Heart left ventricle (tissue), 16 donors: ENCODE measurements at regions of chr12 and their contacts with region 1.

Region 1: GRCh38 chr12:70255311-70255710 is 12.1 kb downstream of the CNOT2 start:
- DNase-seq: no peak
- ATAC-seq: peak in 1 of 4 donors; percentile 47
- H3K4me3 ChIP-seq: no peak overlapping the region
- H3K27ac ChIP-seq: peak overlapping the region in 1 of 12 donors; percentile 55
- H3K4me1 ChIP-seq: peaks cover 0 to 67% (median 33%) of the 10 kb centered on the region in 12 donors
- H3K27me3 ChIP-seq: no peaks in the 10 kb centered on the region
- CTCF ChIP-seq: no peak
- POLR2A ChIP-seq: no peak

Region 2: GRCh38 chr12:70121557-70121956 is 133.8 kb before region 1 on chr12:
- intact Hi-C with region 1: no loop called
- DNase-seq: no peak
- ATAC-seq: no peak
- H3K4me3 ChIP-seq: no peak overlapping the region
- H3K27ac ChIP-seq: no peak overlapping the region
- H3K4me1 ChIP-seq: no peaks in the 10 kb centered on the region
- H3K27me3 ChIP-seq: no peaks in the 10 kb centered on the region
- CTCF ChIP-seq: no peak
- POLR2A ChIP-seq: no peak

Region 3: GRCh38 chr12:70353780-70354660 is 98.7 kb after region 1 on chr12:
- intact Hi-C with region 1: loop called in 1 of 10 experiments (anchors 10 kb)
- DNase-seq: no peak
- ATAC-seq: peak in 1 of 4 donors; percentile 36
- H3K4me3 ChIP-seq: no peak overlapping the region
- H3K27ac ChIP-seq: peak overlapping the region in 1 of 12 donors; percentile 67
- H3K4me1 ChIP-seq: peaks cover 0 to 13% (median 0%) of the 10 kb centered on the region in 12 donors
- H3K27me3 ChIP-seq: no peaks in the 10 kb centered on the region
- CTCF ChIP-seq: no peak
- POLR2A ChIP-seq: no peak

Region 4: DNA sequence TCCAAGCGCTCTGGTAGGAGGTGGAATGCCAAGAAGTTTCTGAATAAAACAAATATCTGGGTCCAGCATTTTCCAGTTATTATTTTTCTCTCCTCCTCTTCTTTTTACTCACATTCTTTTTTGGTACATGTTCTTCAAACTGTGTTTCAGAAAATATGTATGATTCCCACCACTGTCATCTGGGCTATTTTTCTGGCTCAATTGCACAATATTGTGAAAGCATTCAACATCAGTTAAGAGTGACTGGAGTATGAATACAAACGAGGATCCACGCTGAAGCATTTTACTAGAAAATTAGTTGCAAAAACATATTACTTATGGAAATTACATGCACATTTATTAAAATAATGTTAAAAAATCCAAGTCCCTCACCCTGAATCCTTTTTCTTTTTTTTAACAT is 172.3 kb after region 1 on chr12:
- intact Hi-C with region 1: no loop called
- DNase-seq: no peak
- ATAC-seq: no peak
- H3K4me3 ChIP-seq: no peak overlapping the region
- H3K27ac ChIP-seq: no peak overlapping the region
- H3K4me1 ChIP-seq: no peaks in the 10 kb centered on the region
- H3K27me3 ChIP-seq: no peaks in the 10 kb centered on the region
- CTCF ChIP-seq: no peak
- POLR2A ChIP-seq: no peak